ENCODE measurements at regions of chr3 and their contacts with region 1.

Region 1: GRCh38 chr3:72818092-72818773 is 30.0 kb downstream of the SHQ1 start:
- DNase-seq: peak in 4 of 14 experiments; percentile 10 to 30 (median 14)
- ATAC-seq: no peak
- H3K4me3 ChIP-seq: no peak overlapping the region
- H3K4me3 Mint-ChIP-seq: no peak overlapping the region
- H3K27ac ChIP-seq: no peak overlapping the region
- H3K27ac Mint-ChIP-seq: no peak overlapping the region
- H3K4me1 ChIP-seq: peaks cover 7% of the 10 kb centered on the region
- H3K4me1 Mint-ChIP-seq: peaks cover 13% of the 10 kb centered on the region
- H3K27me3 ChIP-seq: no peaks in the 10 kb centered on the region
- H3K27me3 Mint-ChIP-seq: no peaks in the 10 kb centered on the region
- CTCF ChIP-seq: peak; percentile 56

Region 2: DNA sequence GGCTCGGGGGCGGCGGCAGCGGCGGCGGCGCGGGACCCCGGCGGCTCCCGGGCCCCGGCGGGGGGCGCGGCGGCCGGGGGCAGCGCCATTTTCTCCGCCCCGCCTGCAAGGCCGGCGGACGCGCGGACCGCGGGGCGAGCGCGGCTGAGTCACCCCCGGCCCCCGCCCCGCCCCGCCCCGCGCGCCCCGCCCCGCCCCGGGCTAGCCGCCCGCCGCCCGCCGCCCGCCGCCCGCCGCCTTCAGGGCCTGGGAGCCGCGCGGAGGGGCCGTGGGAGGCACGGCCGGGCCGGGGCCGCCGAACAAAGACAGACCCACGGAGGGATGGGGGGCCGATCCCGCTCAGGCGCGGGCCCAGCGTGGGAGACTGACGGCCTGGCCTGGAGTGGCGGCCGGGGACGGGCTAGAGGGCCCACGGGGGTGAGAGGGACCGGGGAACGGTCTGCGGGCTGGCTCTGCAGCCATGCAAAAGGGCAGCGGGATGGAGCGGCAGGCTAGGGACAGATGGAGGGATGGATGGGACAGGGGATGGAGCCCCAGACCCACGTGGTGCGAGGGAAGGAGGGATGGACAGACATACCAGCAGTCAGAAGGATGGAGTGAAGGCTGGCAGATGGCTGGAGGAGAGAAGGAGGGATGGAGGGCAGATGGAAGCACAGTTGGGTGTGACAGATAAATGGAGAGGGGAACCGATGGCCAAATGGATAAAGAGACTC is 1092.8 kb before region 1 on chr3 and contains the start of gene EIF4E3:
- CTCF ChIA-PET with region 1: interaction called, 3 read pairs
- POLR2A ChIA-PET with region 1: no interaction called
- intact Hi-C with region 1: loop called in 1 of 2 experiments (anchors 5 kb)
- DNase-seq: peak in 8 of 14 experiments; percentile 19 to 81 (median 53)
- ATAC-seq: peak; percentile 21
- H3K4me3 ChIP-seq: peak within 1 kb of the TSS; percentile 90
- H3K4me3 Mint-ChIP-seq: peak within 1 kb of the TSS; percentile 89
- H3K27ac ChIP-seq: peak within 1 kb of the TSS; percentile 63 to 84
- H3K27ac Mint-ChIP-seq: peak within 1 kb of the TSS; percentile 91
- H3K4me1 ChIP-seq: peaks cover 62% of the 10 kb centered on the region
- H3K4me1 Mint-ChIP-seq: peaks cover 77% of the 10 kb centered on the region
- H3K27me3 ChIP-seq: no peaks in the 10 kb centered on the region
- H3K27me3 Mint-ChIP-seq: no peaks in the 10 kb centered on the region
- CTCF ChIP-seq: no peak
- total RNA-seq, gene EIF4E3: 48.2 to 50.4 TPM

Region 3: GRCh38 chr3:71926262-71926600 is 892.0 kb before region 1 on chr3:
- CTCF ChIA-PET with region 1: interaction called, 11 read pairs
- POLR2A ChIA-PET with region 1: no interaction called
- intact Hi-C with region 1: loop called (anchors 1 to 2 kb)
- DNase-seq: peak in 4 of 14 experiments; percentile 5 to 45 (median 30)
- ATAC-seq: no peak
- H3K4me3 ChIP-seq: no peak overlapping the region
- H3K4me3 Mint-ChIP-seq: no peak overlapping the region
- H3K27ac ChIP-seq: no peak overlapping the region
- H3K27ac Mint-ChIP-seq: no peak overlapping the region
- H3K4me1 ChIP-seq: no peaks in the 10 kb centered on the region
- H3K4me1 Mint-ChIP-seq: no peaks in the 10 kb centered on the region
- H3K27me3 ChIP-seq: no peaks in the 10 kb centered on the region
- H3K27me3 Mint-ChIP-seq: no peaks in the 10 kb centered on the region
- CTCF ChIP-seq: peak; percentile 25

Region 4: DNA sequence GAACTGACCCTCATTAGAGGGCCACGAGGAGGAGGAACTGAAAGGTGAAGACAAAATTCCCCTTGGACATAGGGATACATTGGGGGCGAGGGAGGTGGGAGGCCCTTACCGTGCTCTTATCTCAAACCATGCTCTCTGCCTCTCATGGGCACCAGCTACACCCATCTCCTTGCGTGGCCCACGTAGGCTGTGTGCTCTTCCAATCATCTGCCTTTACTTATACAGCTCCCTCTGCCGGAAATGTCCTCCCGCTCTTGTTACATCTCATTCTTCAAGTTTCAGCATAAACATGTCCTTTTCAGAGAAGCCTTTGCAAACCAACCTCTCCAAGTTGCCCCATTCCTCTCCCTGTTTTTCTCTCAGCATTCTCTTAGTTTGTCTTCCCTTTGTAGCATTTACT is 725.5 kb before region 1 on chr3:
- CTCF ChIA-PET with region 1: no interaction called
- POLR2A ChIA-PET with region 1: no interaction called
- intact Hi-C with region 1: loop called in 1 of 2 experiments (anchors 10 kb)
- DNase-seq: no peak
- ATAC-seq: no peak
- H3K4me3 ChIP-seq: no peak overlapping the region
- H3K4me3 Mint-ChIP-seq: no peak overlapping the region
- H3K27ac ChIP-seq: no peak overlapping the region
- H3K27ac Mint-ChIP-seq: no peak overlapping the region
- H3K4me1 ChIP-seq: no peaks in the 10 kb centered on the region
- H3K4me1 Mint-ChIP-seq: no peaks in the 10 kb centered on the region
- H3K27me3 ChIP-seq: no peaks in the 10 kb centered on the region
- H3K27me3 Mint-ChIP-seq: no peaks in the 10 kb centered on the region
- CTCF ChIP-seq: no peak

Region 5: GRCh38 chr3:72665701-72666443 is 152.4 kb before region 1 on chr3:
- CTCF ChIA-PET with region 1: interaction called, 38 read pairs
- POLR2A ChIA-PET with region 1: interaction called, 42 read pairs
- intact Hi-C with region 1: loop called (anchors 1 kb)
- DNase-seq: peak; percentile 34 to 76 (median 53)
- ATAC-seq: peak; percentile 51
- H3K4me3 ChIP-seq: no peak overlapping the region
- H3K4me3 Mint-ChIP-seq: no peak overlapping the region
- H3K27ac ChIP-seq: no peak overlapping the region
- H3K27ac Mint-ChIP-seq: no peak overlapping the region
- H3K4me1 ChIP-seq: no peaks in the 10 kb centered on the region
- H3K4me1 Mint-ChIP-seq: no peaks in the 10 kb centered on the region
- H3K27me3 ChIP-seq: peaks cover 0 to 3% of the 10 kb centered on the region in 2 experiments
- H3K27me3 Mint-ChIP-seq: no peaks in the 10 kb centered on the region
- CTCF ChIP-seq: peak; percentile 82

Region 6: DNA sequence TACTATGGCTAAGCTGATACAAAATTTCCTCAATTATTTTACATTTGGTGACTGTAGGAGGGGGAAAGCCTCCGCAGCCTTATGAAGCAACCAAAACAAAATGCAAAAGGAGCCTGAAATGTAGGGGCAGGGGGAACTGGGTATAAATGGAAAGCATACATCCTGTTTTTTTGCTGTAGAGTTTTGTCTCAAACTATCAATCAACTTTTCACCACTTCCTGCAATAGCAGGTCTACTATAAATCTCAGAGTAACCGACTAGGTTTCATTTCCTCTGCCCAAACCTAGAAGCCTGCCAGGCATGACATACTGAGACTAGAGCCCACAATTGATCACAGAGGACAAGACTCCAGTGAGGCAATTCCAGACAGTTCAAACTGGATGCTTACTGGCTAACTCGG is 61.3 kb before region 1 on chr3:
- CTCF ChIA-PET with region 1: no interaction called
- POLR2A ChIA-PET with region 1: interaction called, 12 read pairs
- intact Hi-C with region 1: no loop called
- DNase-seq: peak in 13 of 14 experiments; percentile 12 to 89 (median 35)
- ATAC-seq: peak; percentile 96
- H3K4me3 ChIP-seq: peak overlapping the region; percentile 26
- H3K4me3 Mint-ChIP-seq: peak overlapping the region; percentile 68
- H3K27ac ChIP-seq: peak overlapping the region; percentile 42 to 63
- H3K27ac Mint-ChIP-seq: peak overlapping the region; percentile 85
- H3K4me1 ChIP-seq: peaks cover 22% of the 10 kb centered on the region
- H3K4me1 Mint-ChIP-seq: peaks cover 75% of the 10 kb centered on the region
- H3K27me3 ChIP-seq: no peaks in the 10 kb centered on the region
- H3K27me3 Mint-ChIP-seq: no peaks in the 10 kb centered on the region
- CTCF ChIP-seq: no peak

Region 7: DNA sequence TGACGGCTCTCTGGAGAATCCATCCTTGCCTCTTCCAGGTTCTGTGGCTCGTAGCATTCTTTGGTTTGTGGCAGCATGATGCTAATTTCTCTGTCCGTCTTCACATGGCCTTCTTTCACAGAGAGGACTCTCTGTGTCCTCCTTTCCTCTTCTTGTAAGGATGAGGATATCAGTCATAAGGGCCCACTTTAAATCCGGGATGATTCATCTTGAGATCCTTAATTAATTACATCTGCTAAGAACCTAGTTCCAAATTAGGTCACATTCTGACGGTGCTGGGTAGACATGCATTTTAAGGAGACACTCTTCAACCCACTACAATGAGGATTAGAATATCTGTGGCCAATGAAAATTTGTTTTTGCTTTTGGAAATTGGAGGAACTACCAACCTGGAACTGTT is 54.0 kb after region 1 on chr3:
- CTCF ChIA-PET with region 1: no interaction called
- POLR2A ChIA-PET with region 1: no interaction called
- intact Hi-C with region 1: no loop called
- DNase-seq: no peak
- ATAC-seq: no peak
- H3K4me3 ChIP-seq: no peak overlapping the region
- H3K4me3 Mint-ChIP-seq: no peak overlapping the region
- H3K27ac ChIP-seq: no peak overlapping the region
- H3K27ac Mint-ChIP-seq: no peak overlapping the region
- H3K4me1 ChIP-seq: no peaks in the 10 kb centered on the region
- H3K4me1 Mint-ChIP-seq: no peaks in the 10 kb centered on the region
- H3K27me3 ChIP-seq: peaks cover 3 to 5% of the 10 kb centered on the region in 2 experiments
- H3K27me3 Mint-ChIP-seq: peaks cover 6% of the 10 kb centered on the region
- CTCF ChIP-seq: no peak

Region 8: GRCh38 chr3:73115806-73116205 is 297.6 kb after region 1 on chr3:
- CTCF ChIA-PET with region 1: no interaction called
- POLR2A ChIA-PET with region 1: no interaction called
- intact Hi-C with region 1: no loop called
- DNase-seq: no peak
- ATAC-seq: no peak
- H3K4me3 ChIP-seq: no peak overlapping the region
- H3K4me3 Mint-ChIP-seq: no peak overlapping the region
- H3K27ac ChIP-seq: no peak overlapping the region
- H3K27ac Mint-ChIP-seq: no peak overlapping the region
- H3K4me1 ChIP-seq: no peaks in the 10 kb centered on the region
- H3K4me1 Mint-ChIP-seq: no peaks in the 10 kb centered on the region
- H3K27me3 ChIP-seq: peaks cover 0 to 8% of the 10 kb centered on the region in 2 experiments
- H3K27me3 Mint-ChIP-seq: peaks cover 22% of the 10 kb centered on the region
- CTCF ChIP-seq: no peak